Dorsolateral prefrontal cortex (tissue), 120 donors: ENCODE measurements at regions of chr3 and their contacts with region 1.

Region 1: DNA sequence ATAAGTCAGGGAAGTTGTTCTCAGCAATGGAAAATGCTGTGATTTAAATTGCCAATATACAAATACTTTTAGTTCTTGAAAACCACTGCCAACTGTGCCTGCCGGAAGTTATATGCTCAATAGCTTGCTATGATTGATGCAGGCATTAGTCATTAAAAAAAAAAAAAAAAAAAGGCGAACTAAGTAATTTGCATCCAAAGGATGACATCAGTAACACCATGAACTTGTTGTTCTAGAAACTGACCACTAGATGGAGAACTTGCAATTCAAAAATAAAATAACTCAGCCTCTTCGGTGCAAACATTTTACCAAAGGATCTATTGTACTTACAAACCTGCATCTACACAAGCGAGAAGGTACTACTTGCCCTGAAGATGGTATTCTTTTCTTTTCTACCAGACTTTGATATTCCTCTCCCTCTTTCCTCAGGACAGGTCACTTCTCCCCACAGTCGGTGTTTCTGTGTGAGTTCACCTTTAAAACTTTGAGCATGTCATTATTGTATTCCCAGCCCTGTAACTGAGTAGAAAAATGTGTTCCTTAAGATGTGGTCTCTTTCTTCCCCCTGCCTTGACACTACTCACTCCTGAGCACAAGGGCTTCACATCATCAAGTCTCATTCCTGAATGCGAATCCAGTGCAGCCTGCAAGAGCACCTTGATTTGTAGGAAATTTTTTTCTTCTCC is 115.0 kb upstream of the VEPH1 start:
- DNase-seq: no peak
- H3K4me3 ChIP-seq: no peak overlapping the region
- H3K27ac ChIP-seq: no peak overlapping the region
- H3K27me3 ChIP-seq: no peaks in the 10 kb centered on the region
- CTCF ChIP-seq: peak; percentile 60 to 90 (median 80)

Region 2: GRCh38 chr3:158434412-158435038 is 816.3 kb after region 1 on chr3:
- intact Hi-C with region 1: loop called (anchors 2 to 5 kb)
- DNase-seq: peak in 7 of 10 donors; percentile 38 to 85 (median 51)
- H3K4me3 ChIP-seq: peak overlapping the region in 16 of 59 donors; percentile 2 to 46 (median 20)
- H3K27ac ChIP-seq: no peak overlapping the region
- H3K27me3 ChIP-seq: no peaks in the 10 kb centered on the region
- CTCF ChIP-seq: peak; percentile 60 to 94 (median 80)

Region 3: GRCh38 chr3:158539414-158540014 is 921.3 kb after region 1 on chr3:
- intact Hi-C with region 1: loop called in 1 of 2 experiments (anchors 10 kb)
- DNase-seq: no peak
- H3K4me3 ChIP-seq: no peak overlapping the region
- H3K27ac ChIP-seq: no peak overlapping the region
- H3K27me3 ChIP-seq: no peaks in the 10 kb centered on the region
- CTCF ChIP-seq: peak in 51 of 56 donors; percentile 23 to 66 (median 48)